ENCODE measurements at regions of chr12 and their contacts with region 1.

Region 1: DNA sequence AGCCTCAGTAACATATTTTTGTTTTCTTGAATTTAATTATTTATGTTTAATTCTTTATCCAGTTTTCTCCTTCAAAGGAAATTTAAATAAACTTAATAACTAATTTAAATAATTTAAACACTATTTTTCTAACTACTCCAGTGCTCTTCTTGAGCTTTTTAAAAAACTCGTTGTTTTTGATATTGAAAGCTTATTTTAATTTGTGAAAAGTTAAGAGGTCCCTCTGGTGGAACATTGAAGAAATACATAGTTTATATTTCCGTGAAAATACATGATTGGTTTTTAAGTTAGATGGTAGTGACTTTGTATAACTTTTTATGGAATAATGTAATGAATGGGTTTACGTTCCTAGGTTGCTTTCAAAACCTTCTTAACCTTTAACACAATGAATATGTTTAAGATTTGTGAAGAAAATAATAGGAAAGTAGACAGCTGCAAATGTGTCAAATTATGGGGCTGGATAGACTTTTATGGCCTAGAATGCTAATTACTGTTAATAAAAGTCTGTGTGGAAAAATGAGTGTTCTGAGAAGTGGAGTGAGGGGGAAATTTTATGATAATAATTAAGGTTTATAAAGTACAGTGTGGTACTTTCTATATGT is 45.9 kb upstream of the MSRB3 start:
- DNase-seq: peak; percentile 11
- H3K4me3 ChIP-seq: no peak overlapping the region
- H3K27ac ChIP-seq: no peak overlapping the region
- H3K4me1 ChIP-seq: peaks cover 5% of the 10 kb centered on the region
- H3K27me3 ChIP-seq: no peaks in the 10 kb centered on the region
- CTCF ChIP-seq: peak; percentile 29 to 43

Region 2: GRCh38 chr12:64269171-64269570 is 963.4 kb before region 1 on chr12:
- CTCF ChIA-PET with region 1: no interaction called
- dilution Hi-C with region 1: no loop called
- in situ Hi-C with region 1: no loop called
- intact Hi-C with region 1: no loop called
- DNase-seq: no peak
- H3K4me3 ChIP-seq: no peak overlapping the region
- H3K27ac ChIP-seq: no peak overlapping the region
- H3K4me1 ChIP-seq: no peaks in the 10 kb centered on the region
- H3K27me3 ChIP-seq: no peaks in the 10 kb centered on the region
- CTCF ChIP-seq: no peak

Region 3: GRCh38 chr12:65121049-65121955 is 111.3 kb before region 1 on chr12 and contains the start of gene WIF1:
- CTCF ChIA-PET with region 1: no interaction called
- dilution Hi-C with region 1: no loop called
- in situ Hi-C with region 1: no loop called
- intact Hi-C with region 1: loop called (anchors 1 kb)
- DNase-seq: peak; percentile 37
- H3K4me3 ChIP-seq: peak within 1 kb of the TSS in 2 of 3 experiments; percentile 28 to 33
- H3K27ac ChIP-seq: no peak within 1 kb of the TSS
- H3K4me1 ChIP-seq: peaks cover 10% of the 10 kb centered on the region
- H3K27me3 ChIP-seq: peaks cover 21% of the 10 kb centered on the region
- CTCF ChIP-seq: peak; percentile 11 to 13
- total RNA-seq, gene WIF1: not detected

Region 4: GRCh38 chr12:65169320-65170208 is 63.0 kb before region 1 on chr12 and contains the start of gene LEMD3:
- CTCF ChIA-PET with region 1: no interaction called
- dilution Hi-C with region 1: no loop called
- in situ Hi-C with region 1: no loop called
- intact Hi-C with region 1: loop called (anchors 2 kb)
- DNase-seq: peak; percentile 97
- H3K4me3 ChIP-seq: peak within 1 kb of the TSS; percentile 63 to 99 (median 97)
- H3K27ac ChIP-seq: peak within 1 kb of the TSS; percentile 89
- H3K4me1 ChIP-seq: peaks cover 10% of the 10 kb centered on the region
- H3K27me3 ChIP-seq: no peaks in the 10 kb centered on the region
- CTCF ChIP-seq: peak in 1 of 2 donors; percentile 4
- total RNA-seq, gene LEMD3: 31.2 to 47.0 TPM

Region 5: GRCh38 chr12:65269603-65270002 is 37.0 kb after region 1 on chr12:
- CTCF ChIA-PET with region 1: no interaction called
- dilution Hi-C with region 1: no loop called
- in situ Hi-C with region 1: no loop called
- intact Hi-C with region 1: no loop called
- DNase-seq: no peak
- H3K4me3 ChIP-seq: no peak overlapping the region
- H3K27ac ChIP-seq: no peak overlapping the region
- H3K4me1 ChIP-seq: no peaks in the 10 kb centered on the region
- H3K27me3 ChIP-seq: no peaks in the 10 kb centered on the region
- CTCF ChIP-seq: no peak